Activated B cell treated with CpG ODN at 0.5 μM for 24 hours (primary cell): ENCODE measurements at regions of chr12 and their contacts with region 1.

Region 1: DNA sequence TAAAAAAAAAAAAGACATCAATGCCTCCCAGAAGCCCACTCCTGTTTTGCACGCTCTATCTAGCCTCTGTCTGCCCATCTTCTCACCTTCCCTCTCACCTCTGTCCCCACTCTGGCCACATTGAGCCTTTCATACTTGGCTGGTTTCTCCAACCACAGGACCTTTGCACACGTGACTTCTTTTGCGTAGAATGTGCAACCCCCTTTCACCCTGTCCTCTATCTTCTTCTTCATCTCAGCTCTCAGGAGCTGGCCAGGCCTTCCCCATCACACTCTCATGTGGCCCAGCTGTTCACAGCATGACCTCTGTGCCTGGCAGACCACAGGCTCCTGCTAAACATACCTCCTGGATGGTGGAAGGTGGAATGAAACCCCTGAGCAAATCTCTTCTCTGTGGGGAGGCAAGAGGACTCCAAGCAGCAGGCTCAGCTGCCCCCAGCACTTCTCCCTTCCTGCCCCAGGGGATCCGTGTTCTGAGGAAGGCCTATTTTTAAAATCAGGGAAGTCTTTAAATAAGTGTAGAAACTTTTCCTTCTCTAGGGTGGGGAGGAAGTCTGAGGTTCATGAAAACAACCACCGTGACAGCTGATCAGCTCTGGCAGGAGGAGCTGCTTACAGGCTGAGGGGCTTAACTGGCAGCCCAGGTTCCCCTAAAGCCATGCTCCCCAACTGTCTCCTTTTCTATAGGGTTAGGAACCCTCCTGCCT is 11.6 kb downstream of the HVCN1 start:
- DNase-seq: peak; percentile 50
- ATAC-seq: peak; percentile 64
- H3K4me3 Mint-ChIP-seq: peak overlapping the region; percentile 78
- H3K27ac Mint-ChIP-seq: peak overlapping the region; percentile 90
- H3K4me1 Mint-ChIP-seq: peaks cover 96% of the 10 kb centered on the region
- H3K27me3 Mint-ChIP-seq: no peaks in the 10 kb centered on the region
- CTCF ChIP-seq: no peak

Region 2: GRCh38 chr12:110613771-110614684 is 63.3 kb before region 1 on chr12 and contains the start of gene TCTN1:
- CTCF ChIA-PET with region 1: no interaction called
- POLR2A ChIA-PET with region 1: interaction called, 14 read pairs
- intact Hi-C with region 1: no loop called
- DNase-seq: peak; percentile 95
- ATAC-seq: peak; percentile 98
- H3K4me3 Mint-ChIP-seq: peak within 1 kb of the TSS; percentile 89
- H3K27ac Mint-ChIP-seq: peak within 1 kb of the TSS; percentile 94
- H3K4me1 Mint-ChIP-seq: peaks cover 57% of the 10 kb centered on the region
- H3K27me3 Mint-ChIP-seq: no peaks in the 10 kb centered on the region
- CTCF ChIP-seq: no peak
- total RNA-seq, gene TCTN1: 22.4 and 29.5 TPM in 2 replicates

Region 3: DNA sequence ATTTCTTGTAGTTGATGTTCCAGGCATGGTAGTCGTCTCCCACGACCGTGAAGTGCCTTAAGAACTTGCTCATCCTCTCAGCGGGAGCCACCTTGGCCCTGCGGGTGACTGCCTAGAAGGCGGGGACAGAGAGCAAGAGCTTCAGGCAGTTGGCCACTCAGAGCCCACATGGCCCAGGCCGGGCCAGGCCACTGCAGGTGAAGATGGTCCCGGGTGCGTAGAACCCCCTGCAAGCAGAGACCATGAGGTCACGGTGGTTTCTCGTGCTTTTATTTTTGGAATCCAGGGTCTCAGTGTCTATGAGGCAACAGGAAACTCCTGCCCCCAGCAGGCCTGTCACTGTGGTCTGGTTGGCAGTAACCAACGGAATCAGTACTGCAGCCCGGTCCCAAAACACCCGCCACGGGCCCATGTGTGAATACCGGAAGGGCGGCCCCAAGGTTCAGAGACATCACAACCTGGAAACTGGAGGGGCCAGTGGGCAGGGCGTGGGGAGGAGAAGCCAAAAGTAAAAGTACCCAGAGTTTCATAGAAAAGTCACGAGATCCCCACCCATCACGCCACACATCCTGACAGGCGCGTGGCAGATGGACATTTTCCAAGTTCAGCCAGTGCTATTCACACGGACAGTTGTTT is 15.9 kb before region 1 on chr12:
- CTCF ChIA-PET with region 1: interaction called, 3 read pairs
- POLR2A ChIA-PET with region 1: interaction called, 29 read pairs
- intact Hi-C with region 1: loop called (anchors 1 kb)
- DNase-seq: peak; percentile 73
- ATAC-seq: peak; percentile 87
- H3K4me3 Mint-ChIP-seq: peak overlapping the region; percentile 82
- H3K27ac Mint-ChIP-seq: peak overlapping the region; percentile 97
- H3K4me1 Mint-ChIP-seq: peaks cover 89% of the 10 kb centered on the region
- H3K27me3 Mint-ChIP-seq: no peaks in the 10 kb centered on the region
- CTCF ChIP-seq: no peak

Region 4: DNA sequence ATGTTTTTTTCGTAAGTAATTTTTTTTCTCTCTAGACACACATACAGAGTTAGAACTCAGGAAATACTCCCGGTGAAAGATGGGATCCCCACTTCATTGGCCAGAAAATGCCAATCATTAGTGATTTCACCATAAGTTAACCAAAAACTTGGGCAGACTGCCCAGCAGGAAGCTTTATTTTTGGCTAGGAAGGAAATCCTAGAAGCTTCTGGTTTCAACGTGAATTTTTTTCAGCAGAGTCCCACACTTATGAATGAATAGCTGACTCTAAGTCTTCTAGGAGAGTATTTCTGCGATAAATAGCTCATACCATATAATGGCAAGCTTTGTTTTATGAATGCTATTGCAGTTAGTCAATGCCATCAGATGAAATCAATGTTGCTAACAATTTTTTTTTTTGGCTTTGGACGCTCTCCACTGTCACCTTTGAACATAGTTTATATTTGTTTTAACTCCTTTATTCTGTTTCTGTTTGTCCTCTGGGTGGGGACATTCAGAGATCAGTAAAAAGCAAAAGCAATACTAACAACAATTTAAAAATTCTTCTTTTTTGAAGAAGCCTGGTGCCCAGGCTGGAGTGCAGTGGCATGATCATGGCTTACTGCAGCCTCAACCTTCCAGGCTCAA is 55.8 kb after region 1 on chr12:
- CTCF ChIA-PET with region 1: no interaction called
- POLR2A ChIA-PET with region 1: no interaction called
- intact Hi-C with region 1: no loop called
- DNase-seq: no peak
- ATAC-seq: no peak
- H3K4me3 Mint-ChIP-seq: no peak overlapping the region
- H3K27ac Mint-ChIP-seq: peak overlapping the region; percentile 30
- H3K4me1 Mint-ChIP-seq: peaks cover 72% of the 10 kb centered on the region
- H3K27me3 Mint-ChIP-seq: no peaks in the 10 kb centered on the region
- CTCF ChIP-seq: no peak